ENCODE measurements at regions of chr6 and their contacts with region 1.

Region 1: GRCh38 chr6:33570806-33571636 is 9.1 kb downstream of the BAK1 start:
- DNase-seq: peak; percentile 66
- H3K4me3 Mint-ChIP-seq: peak overlapping the region; percentile 93
- H3K27ac Mint-ChIP-seq: peak overlapping the region; percentile 75
- H3K4me1 Mint-ChIP-seq: peaks cover 15% of the 10 kb centered on the region
- H3K27me3 Mint-ChIP-seq: no peaks in the 10 kb centered on the region
- CTCF ChIP-seq: no peak

Region 2: DNA sequence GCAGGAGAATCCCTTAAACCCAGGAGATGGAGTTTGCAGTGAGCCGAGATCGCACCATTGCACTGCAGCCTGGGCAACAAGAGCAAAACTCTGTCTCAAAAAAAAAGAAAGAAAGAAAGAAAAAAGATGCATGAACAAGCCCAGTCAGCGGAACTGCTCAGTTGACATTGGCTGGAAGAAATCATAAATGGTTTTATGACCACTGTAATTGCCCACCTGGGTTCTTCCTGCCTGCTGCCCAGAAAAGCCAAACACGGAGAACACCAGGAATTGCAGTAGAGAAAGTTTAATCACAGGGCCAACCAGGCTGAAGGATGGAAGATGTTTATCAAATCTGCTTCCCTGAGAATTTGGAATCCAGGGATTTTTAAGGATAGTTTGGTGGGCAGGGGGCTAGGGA is 13.6 kb before region 1 on chr6:
- CTCF ChIA-PET with region 1: no interaction called
- POLR2A ChIA-PET with region 1: interaction called, 26 read pairs
- intact Hi-C with region 1: no loop called
- DNase-seq: no peak
- H3K4me3 Mint-ChIP-seq: no peak overlapping the region
- H3K27ac Mint-ChIP-seq: peak overlapping the region; percentile 65
- H3K4me1 Mint-ChIP-seq: peaks cover 7% of the 10 kb centered on the region
- H3K27me3 Mint-ChIP-seq: no peaks in the 10 kb centered on the region
- CTCF ChIP-seq: no peak

Region 3: GRCh38 chr6:33599413-33599911 is 28.4 kb after region 1 on chr6:
- CTCF ChIA-PET with region 1: no interaction called
- POLR2A ChIA-PET with region 1: no interaction called
- intact Hi-C with region 1: no loop called
- DNase-seq: peak; percentile 84
- H3K4me3 Mint-ChIP-seq: no peak overlapping the region
- H3K27ac Mint-ChIP-seq: peak overlapping the region; percentile 76
- H3K4me1 Mint-ChIP-seq: peaks cover 17% of the 10 kb centered on the region
- H3K27me3 Mint-ChIP-seq: no peaks in the 10 kb centered on the region
- CTCF ChIP-seq: no peak

Region 4: GRCh38 chr6:33634161-33634727 is 63.2 kb after region 1 on chr6:
- CTCF ChIA-PET with region 1: no interaction called
- POLR2A ChIA-PET with region 1: no interaction called
- intact Hi-C with region 1: no loop called
- DNase-seq: no peak
- H3K4me3 Mint-ChIP-seq: peak overlapping the region; percentile 72
- H3K27ac Mint-ChIP-seq: no peak overlapping the region
- H3K4me1 Mint-ChIP-seq: peaks cover 51% of the 10 kb centered on the region
- H3K27me3 Mint-ChIP-seq: no peaks in the 10 kb centered on the region
- CTCF ChIP-seq: no peak

Measured in MCF 10A (cell line).